ENCODE measurements at regions of chr12 and their contacts with region 1.

Region 1: GRCh38 chr12:110600254-110600653 is 13.7 kb upstream of the TCTN1 start:
- DNase-seq: no peak
- ATAC-seq: no peak
- H3K4me3 Mint-ChIP-seq: no peak overlapping the region
- H3K27ac Mint-ChIP-seq: no peak overlapping the region
- H3K4me1 Mint-ChIP-seq: no peaks in the 10 kb centered on the region
- H3K27me3 Mint-ChIP-seq: no peaks in the 10 kb centered on the region
- CTCF ChIP-seq: no peak

Region 2: DNA sequence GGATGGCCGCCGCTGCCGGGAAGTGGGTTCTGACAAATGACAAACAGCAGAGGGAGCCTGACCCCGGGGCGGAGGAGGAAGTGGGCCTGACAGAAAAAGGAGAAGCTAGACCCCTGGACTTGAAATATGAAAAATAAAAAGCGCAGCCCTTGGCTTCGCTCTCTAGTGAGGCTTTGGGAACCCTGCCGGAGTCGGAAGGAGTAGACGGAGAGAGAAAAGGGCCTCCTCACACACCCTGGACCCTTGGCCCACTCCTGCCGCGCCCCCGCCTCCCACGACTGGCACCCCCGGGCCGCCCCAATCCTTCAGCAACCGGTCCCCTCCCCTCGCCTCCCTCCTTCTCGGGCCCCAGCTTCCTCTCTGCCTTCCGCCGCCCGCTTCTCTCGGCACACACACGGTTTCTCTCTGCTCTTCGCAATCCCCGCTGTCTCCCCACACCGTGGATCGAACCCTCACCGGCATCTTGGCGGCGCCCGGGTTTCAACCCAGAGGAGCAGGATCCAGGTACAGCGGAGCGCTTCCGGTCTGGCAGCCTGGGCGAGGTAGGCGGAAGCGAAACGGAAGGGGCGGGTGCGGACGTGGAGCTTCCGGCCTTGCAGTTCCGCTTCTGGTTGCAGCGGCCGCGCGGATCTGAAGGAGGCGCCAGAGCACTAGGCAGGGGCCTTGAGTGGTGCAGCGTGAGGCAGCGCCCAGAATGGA is 150.3 kb before region 1 on chr12 and contains the start of gene ARPC3:
- CTCF ChIA-PET with region 1: interaction called, 55 read pairs
- POLR2A ChIA-PET with region 1: no interaction called
- DNase-seq: peak; percentile 94
- ATAC-seq: peak; percentile 97
- H3K4me3 Mint-ChIP-seq: peak within 1 kb of the TSS; percentile 100
- H3K27ac Mint-ChIP-seq: peak within 1 kb of the TSS; percentile 98
- H3K4me1 Mint-ChIP-seq: peaks cover 7% of the 10 kb centered on the region; the same call in 1 of the 2 replicates
- H3K27me3 Mint-ChIP-seq: no peaks in the 10 kb centered on the region; the same call in 1 of the 2 replicates
- CTCF ChIP-seq: peak; percentile 50; the same call in 1 of the 2 replicates
- total RNA-seq, gene ARPC3: 145 to 163 TPM (median 149 TPM) in 3 replicates

Region 3: GRCh38 chr12:110468212-110469048 is 131.8 kb before region 1 on chr12 and contains the starts of genes FAM216A and GPN3:
- CTCF ChIA-PET with region 1: interaction called, 25 read pairs
- POLR2A ChIA-PET with region 1: interaction called, 4 read pairs
- DNase-seq: peak; percentile 97
- ATAC-seq: peak; percentile 87
- H3K4me3 Mint-ChIP-seq: peak within 1 kb of the TSS; percentile 100
- H3K27ac Mint-ChIP-seq: peak within 1 kb of the TSS; percentile 100
- H3K4me1 Mint-ChIP-seq: peaks cover 22% of the 10 kb centered on the region
- H3K27me3 Mint-ChIP-seq: no peaks in the 10 kb centered on the region
- CTCF ChIP-seq: no peak
- total RNA-seq, gene FAM216A: 16.9 to 20.2 TPM (median 19.7 TPM) in 3 replicates
- total RNA-seq, gene GPN3: 46.4 to 53.0 TPM (median 51.2 TPM) in 3 replicates

Region 4: GRCh38 chr12:110554184-110554583 is 46.1 kb before region 1 on chr12:
- CTCF ChIA-PET with region 1: interaction called, 22 read pairs
- POLR2A ChIA-PET with region 1: no interaction called
- DNase-seq: no peak
- ATAC-seq: no peak
- H3K4me3 Mint-ChIP-seq: no peak overlapping the region
- H3K27ac Mint-ChIP-seq: no peak overlapping the region
- H3K4me1 Mint-ChIP-seq: peaks cover 3% of the 10 kb centered on the region
- H3K27me3 Mint-ChIP-seq: no peaks in the 10 kb centered on the region
- CTCF ChIP-seq: no peak

Region 5: GRCh38 chr12:110661337-110661972 is 61.2 kb after region 1 on chr12:
- CTCF ChIA-PET with region 1: no interaction called
- POLR2A ChIA-PET with region 1: no interaction called
- DNase-seq: no peak
- ATAC-seq: no peak; the same call in 1 of the 2 replicates
- H3K4me3 Mint-ChIP-seq: no peak overlapping the region
- H3K27ac Mint-ChIP-seq: no peak overlapping the region
- H3K4me1 Mint-ChIP-seq: no peaks in the 10 kb centered on the region; the same call in 1 of the 2 replicates
- H3K27me3 Mint-ChIP-seq: no peaks in the 10 kb centered on the region
- CTCF ChIP-seq: no peak

Measured in WTC11 (cell line).